IMR-90 (cell line): ENCODE measurements at regions of chr2 and their contacts with region 1.

Region 1: DNA sequence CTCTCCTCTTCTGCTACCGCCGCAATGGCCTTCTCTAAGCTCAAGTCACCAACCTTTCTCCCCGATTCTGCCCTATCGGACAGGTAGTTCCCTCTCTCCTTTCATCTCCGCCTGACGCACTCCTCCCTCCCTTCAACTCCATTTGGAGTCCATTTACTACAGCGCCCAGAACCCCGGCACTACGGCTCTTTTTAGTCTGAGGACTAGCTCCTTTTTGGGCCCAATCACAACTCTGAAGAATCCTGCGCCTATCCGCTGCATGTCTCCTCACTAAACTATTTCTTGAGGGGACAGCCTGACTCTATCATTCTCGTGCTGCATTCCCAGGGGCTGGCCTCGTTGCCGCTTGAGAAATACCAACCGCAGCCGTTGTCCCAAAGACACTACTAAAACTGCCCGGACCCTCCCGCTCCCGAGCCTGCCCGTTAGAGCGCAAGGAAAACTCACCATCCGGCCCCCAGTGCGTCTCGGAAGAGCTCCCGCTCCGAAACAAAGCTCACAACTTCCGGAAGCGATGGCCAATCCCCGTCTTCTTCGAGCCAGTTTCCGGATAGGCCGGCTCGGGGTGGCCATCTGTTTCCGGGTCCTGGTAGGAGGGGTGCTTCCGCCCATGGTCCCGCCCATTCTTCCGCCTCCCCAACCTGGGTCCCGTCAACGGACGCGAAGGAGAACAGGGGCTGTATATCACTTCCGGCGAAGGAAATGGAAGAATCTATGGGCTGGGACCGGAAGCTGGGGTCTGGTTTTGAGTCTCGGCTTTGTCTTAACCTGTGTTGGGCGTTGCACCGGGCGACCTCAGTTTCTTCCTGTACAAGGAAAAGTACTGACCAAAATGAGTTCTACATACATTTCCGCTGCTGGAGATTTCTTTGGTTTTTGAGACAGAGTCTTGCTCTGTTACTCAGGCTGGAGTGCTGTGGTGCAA is at the start of gene TPRKB:
- DNase-seq: peak; percentile 97
- ATAC-seq: peak; percentile 98
- H3K4me3 ChIP-seq: peak within 1 kb of the TSS; percentile 74
- H3K27ac ChIP-seq: peak within 1 kb of the TSS; percentile 26
- H3K4me1 ChIP-seq: no peaks in the 10 kb centered on the region
- H3K27me3 ChIP-seq: no peaks in the 10 kb centered on the region
- CTCF ChIP-seq: no peak
- POLR2A ChIP-seq: 0 out of 2 replicates have a peak, but pooled peaks have one; percentile 48
- RAD21 ChIP-seq: no peak
- total RNA-seq, gene TPRKB: 37.6 and 52.2 TPM in 2 replicates

Region 2: DNA sequence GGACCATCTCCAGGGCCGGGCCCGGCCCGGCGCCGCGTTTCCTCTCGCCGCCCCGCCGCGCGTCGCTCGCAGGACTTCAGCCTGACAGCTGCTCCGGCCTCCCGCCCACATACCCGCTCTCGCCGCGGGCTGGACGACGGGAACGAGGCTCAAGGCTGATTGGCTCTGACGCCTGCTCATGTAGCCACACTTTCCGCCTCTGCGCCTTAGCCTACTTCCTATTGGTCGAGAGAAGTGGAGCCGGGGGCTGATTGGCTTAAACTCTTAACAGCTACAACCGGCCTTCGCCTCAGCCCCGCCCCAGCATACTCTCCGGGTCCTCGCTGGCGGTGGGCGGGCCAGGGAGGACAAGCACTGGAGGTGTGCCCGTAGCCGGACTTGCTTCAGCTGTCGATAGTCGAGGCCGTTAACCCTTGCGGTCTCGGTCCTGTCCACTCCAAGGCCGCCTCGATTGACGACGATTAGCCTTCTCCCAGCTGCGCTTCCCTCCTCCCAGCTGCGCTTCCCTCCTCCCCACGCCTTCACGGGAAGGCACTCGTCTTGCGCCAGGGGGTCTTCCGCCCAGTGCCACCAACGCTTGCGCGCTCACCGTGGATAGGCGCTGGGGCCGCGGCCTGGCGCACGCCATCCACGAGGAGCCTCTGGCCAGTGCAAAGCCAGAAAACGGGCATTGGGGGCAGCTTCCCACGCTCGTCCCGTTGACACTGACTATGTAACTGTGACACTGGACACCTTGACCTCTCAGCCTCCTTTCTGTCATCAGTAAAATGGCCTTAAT is 503.8 kb before region 1 on chr2 and contains the start of gene PRADC1:
- CTCF ChIA-PET with region 1: no interaction called
- POLR2A ChIA-PET with region 1: no interaction called
- dilution Hi-C with region 1: no loop called
- in situ Hi-C with region 1: no loop called
- intact Hi-C with region 1: loop called (anchors 5 kb)
- DNase-seq: peak; percentile 100
- ATAC-seq: peak; percentile 93
- H3K4me3 ChIP-seq: peak within 1 kb of the TSS; percentile 83
- H3K27ac ChIP-seq: peak within 1 kb of the TSS; percentile 71
- H3K4me1 ChIP-seq: peaks cover 5% of the 10 kb centered on the region; the same call in 1 of the 2 replicates
- H3K27me3 ChIP-seq: no peaks in the 10 kb centered on the region
- CTCF ChIP-seq: no peak
- POLR2A ChIP-seq: peak; percentile 46; the same call in 1 of the 2 replicates
- RAD21 ChIP-seq: no peak
- total RNA-seq, gene PRADC1: 13.1 and 14.4 TPM in 2 replicates

Region 3: GRCh38 chr2:73685770-73686438 is 51.2 kb before region 1 on chr2:
- CTCF ChIA-PET with region 1: no interaction called
- POLR2A ChIA-PET with region 1: no interaction called
- dilution Hi-C with region 1: no loop called
- in situ Hi-C with region 1: no loop called
- intact Hi-C with region 1: loop called (anchors 2 kb)
- DNase-seq: no peak
- ATAC-seq: no peak
- H3K4me3 ChIP-seq: no peak overlapping the region
- H3K27ac ChIP-seq: no peak overlapping the region
- H3K4me1 ChIP-seq: no peaks in the 10 kb centered on the region
- H3K27me3 ChIP-seq: peaks cover 4% of the 10 kb centered on the region; the same call in 1 of the 2 replicates
- CTCF ChIP-seq: no peak
- POLR2A ChIP-seq: no peak
- RAD21 ChIP-seq: no peak

Region 4: GRCh38 chr2:73926493-73927338 is 189.6 kb after region 1 on chr2 and contains the start of gene DGUOK:
- CTCF ChIA-PET with region 1: no interaction called
- POLR2A ChIA-PET with region 1: no interaction called
- dilution Hi-C with region 1: no loop called
- in situ Hi-C with region 1: no loop called
- intact Hi-C with region 1: no loop called
- DNase-seq: peak; percentile 100
- ATAC-seq: peak; percentile 97
- H3K4me3 ChIP-seq: peak within 1 kb of the TSS; percentile 76
- H3K27ac ChIP-seq: peak within 1 kb of the TSS; percentile 96
- H3K4me1 ChIP-seq: peaks cover 2% of the 10 kb centered on the region
- H3K27me3 ChIP-seq: no peaks in the 10 kb centered on the region
- CTCF ChIP-seq: no peak
- POLR2A ChIP-seq: peak; percentile 94
- RAD21 ChIP-seq: no peak
- total RNA-seq, gene DGUOK: 57.2 and 66.3 TPM in 2 replicates